Aorta (tissue), 5 donors: ENCODE measurements at regions of chr4 and their contacts with region 1.

Region 1: GRCh38 chr4:37908488-37909331 is 17.8 kb downstream of the TBC1D1 start:
- DNase-seq: no peak
- ATAC-seq: no peak
- H3K4me3 ChIP-seq: peak overlapping the region in 1 of 2 donors; percentile 87
- H3K27ac ChIP-seq: peak overlapping the region; percentile 84 to 99
- H3K4me1 ChIP-seq: peaks cover 3 to 9% of the 10 kb centered on the region in 2 donors
- H3K27me3 ChIP-seq: no peaks in the 10 kb centered on the region

Region 2: GRCh38 chr4:37847311-37847884 is 61.3 kb before region 1 on chr4:
- intact Hi-C with region 1: no loop called
- DNase-seq: no peak
- ATAC-seq: no peak
- H3K4me3 ChIP-seq: no peak overlapping the region
- H3K27ac ChIP-seq: no peak overlapping the region
- H3K4me1 ChIP-seq: no peaks in the 10 kb centered on the region
- H3K27me3 ChIP-seq: no peaks in the 10 kb centered on the region

Region 3: DNA sequence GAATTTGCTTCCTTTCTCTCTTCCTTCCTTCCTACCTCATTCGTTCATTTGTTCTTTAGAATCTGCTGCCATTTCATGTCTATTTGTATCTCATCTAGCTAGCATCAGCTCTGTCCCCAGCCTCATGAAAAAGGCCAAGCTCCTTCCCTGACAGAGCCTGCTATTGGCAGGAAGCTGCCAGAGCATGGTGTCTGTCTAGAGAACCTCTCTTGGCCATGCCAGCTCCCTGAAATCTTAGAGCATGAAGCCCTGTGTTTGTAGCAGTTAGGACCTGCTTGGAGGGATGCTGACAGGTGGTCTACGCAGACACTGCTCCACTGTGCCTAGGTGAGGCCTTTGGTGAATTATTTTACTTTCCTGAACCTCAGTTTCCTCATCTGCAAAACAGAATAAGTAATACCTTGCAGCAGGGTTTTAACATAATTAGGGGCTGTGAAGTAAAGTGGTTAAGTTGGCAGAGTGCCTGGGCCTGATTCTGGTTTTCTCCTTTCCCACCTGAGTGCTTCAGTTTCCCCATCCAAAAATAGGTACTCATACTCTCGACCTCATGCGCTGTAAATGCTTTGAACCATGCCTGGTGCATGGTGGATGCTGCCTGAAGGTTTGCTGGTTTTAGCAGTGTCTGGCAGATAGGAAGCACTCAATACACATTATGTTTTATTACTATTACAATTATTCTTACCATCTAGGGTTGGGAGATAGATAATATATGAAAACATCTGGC is 56.2 kb after region 1 on chr4:
- intact Hi-C with region 1: loop called (anchors 5 kb)
- DNase-seq: no peak
- ATAC-seq: no peak
- H3K4me3 ChIP-seq: no peak overlapping the region
- H3K27ac ChIP-seq: no peak overlapping the region
- H3K4me1 ChIP-seq: peaks cover 4 to 12% of the 10 kb centered on the region in 2 donors
- H3K27me3 ChIP-seq: no peaks in the 10 kb centered on the region

Region 4: GRCh38 chr4:37970487-37971101 is 61.9 kb after region 1 on chr4:
- intact Hi-C with region 1: loop called (anchors 5 kb)
- DNase-seq: peak; percentile 91 to 92
- ATAC-seq: peak; percentile 88
- H3K4me3 ChIP-seq: no peak overlapping the region
- H3K27ac ChIP-seq: peak overlapping the region; percentile 84 to 93
- H3K4me1 ChIP-seq: peaks cover 7 to 19% of the 10 kb centered on the region in 2 donors
- H3K27me3 ChIP-seq: no peaks in the 10 kb centered on the region

Region 5: GRCh38 chr4:38343608-38344007 is 434.9 kb after region 1 on chr4:
- intact Hi-C with region 1: no loop called
- DNase-seq: no peak
- ATAC-seq: no peak
- H3K4me3 ChIP-seq: no peak overlapping the region
- H3K27ac ChIP-seq: no peak overlapping the region
- H3K4me1 ChIP-seq: no peaks in the 10 kb centered on the region
- H3K27me3 ChIP-seq: no peaks in the 10 kb centered on the region

Region 6: DNA sequence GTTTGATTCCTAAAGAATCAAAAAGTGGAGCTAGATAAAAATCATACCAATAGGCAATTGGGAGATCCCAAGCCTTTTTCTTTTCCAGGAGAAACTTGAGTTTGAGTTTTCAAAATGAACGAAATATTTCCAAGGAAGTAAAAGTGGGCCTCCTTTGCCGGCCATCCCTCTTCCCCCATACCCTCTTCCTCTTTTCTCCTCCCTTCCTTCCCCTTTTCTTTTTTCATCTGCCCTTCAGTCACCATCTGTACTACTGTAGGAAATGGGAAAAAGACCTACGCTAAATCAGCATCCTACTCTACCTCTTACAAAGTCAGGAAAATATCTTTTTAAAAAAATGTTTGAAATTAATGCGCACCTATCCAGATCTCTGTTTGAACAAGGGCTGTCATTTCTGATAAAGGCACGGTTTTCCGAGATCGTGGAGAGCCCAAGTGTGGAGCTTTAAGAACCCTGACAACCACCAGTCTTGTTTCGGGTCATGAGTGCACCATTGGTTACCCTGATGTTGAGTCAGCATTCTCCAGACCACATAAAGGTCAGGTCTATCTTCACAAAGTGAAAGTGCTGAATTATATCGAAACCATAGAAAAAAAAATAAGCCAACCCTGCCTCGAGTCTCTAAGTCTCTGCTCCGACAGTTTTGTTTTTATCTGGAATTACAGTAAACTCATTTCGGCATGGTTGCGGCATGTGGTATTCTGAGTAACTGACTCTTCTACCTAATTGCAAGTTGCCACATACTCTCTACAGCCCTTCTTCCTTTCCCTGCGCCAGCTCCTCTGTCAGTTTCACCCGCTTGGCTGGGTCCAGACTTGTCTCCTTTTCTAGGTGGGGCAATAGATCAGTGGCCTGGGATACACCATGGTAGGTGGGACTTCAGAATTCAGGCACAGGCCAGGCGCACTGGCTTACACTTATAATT is 615.1 kb after region 1 on chr4:
- intact Hi-C with region 1: no loop called
- DNase-seq: no peak
- ATAC-seq: no peak
- H3K4me3 ChIP-seq: no peak overlapping the region
- H3K27ac ChIP-seq: no peak overlapping the region
- H3K4me1 ChIP-seq: no peaks in the 10 kb centered on the region
- H3K27me3 ChIP-seq: no peaks in the 10 kb centered on the region